Sigmoid colon (tissue), 7 donors: ENCODE measurements at regions of chr10 and their contacts with region 1.

Region 1: DNA sequence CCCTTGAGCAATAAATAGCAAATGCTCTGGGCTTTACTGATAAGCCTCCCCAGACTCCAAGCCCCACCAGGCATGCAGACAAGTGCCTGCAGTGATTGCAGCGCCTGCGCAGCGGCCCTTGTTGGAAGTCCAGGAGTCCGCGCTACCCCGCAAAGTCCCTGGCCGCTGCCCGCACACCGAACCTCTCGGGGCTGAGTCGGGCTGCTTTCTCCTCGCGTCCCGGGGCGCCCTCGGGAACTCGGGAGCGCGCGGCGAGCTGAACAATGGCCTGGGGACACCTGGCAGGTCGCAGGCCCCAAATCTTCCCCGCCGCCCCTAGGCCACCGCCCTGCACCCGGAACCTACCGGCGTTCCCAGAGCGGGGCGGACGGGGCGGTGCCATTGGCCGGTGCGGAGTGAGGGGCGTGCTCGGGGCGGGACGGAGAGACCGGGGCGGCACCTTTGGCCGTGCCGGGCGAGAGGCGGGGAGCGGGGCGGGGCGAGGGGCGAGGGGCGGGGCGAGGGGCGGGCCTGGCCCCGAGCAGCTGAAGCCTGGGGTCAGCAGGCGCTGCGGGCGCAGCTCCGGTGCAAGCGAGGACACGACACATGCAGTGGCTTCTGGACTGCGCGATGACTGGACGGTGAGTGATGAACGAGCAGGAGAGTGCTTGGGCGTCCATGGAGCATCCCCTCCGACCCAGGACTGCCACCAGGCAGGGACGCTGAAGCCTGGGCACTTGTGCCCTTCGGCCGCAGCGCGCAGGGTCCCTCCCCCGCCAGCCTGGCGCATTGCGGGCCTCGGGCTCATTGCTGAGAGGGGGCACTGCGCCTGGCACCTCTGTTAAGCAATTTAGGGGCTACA is at the start of gene RASSF4:
- DNase-seq: peak; percentile 96
- H3K4me3 ChIP-seq: peak within 1 kb of the TSS; percentile 65 to 74 (median 69)
- H3K27ac ChIP-seq: peak within 1 kb of the TSS; percentile 90 to 93 (median 91)
- H3K4me1 ChIP-seq: peaks cover 0 to 49% (median 30%) of the 10 kb centered on the region in 4 donors
- H3K27me3 ChIP-seq: no peaks in the 10 kb centered on the region
- CTCF ChIP-seq: no peak
- EP300 ChIP-seq: no peak
- POLR2A ChIP-seq: peak; percentile 70 to 87
- total RNA-seq, gene RASSF4: 23.2 to 61.7 (median 45.2) TPM

Region 2: GRCh38 chr10:44932517-44933450 is 26.7 kb before region 1 on chr10:
- intact Hi-C with region 1: loop called (anchors 2 kb)
- DNase-seq: peak; percentile 93
- H3K4me3 ChIP-seq: no peak overlapping the region
- H3K27ac ChIP-seq: peak overlapping the region in 2 of 4 donors; percentile 1 to 16
- H3K4me1 ChIP-seq: peaks cover 0 to 38% (median 28%) of the 10 kb centered on the region in 4 donors
- H3K27me3 ChIP-seq: no peaks in the 10 kb centered on the region
- CTCF ChIP-seq: peak; percentile 92 to 96 (median 96)
- EP300 ChIP-seq: no peak
- POLR2A ChIP-seq: no peak

Region 3: DNA sequence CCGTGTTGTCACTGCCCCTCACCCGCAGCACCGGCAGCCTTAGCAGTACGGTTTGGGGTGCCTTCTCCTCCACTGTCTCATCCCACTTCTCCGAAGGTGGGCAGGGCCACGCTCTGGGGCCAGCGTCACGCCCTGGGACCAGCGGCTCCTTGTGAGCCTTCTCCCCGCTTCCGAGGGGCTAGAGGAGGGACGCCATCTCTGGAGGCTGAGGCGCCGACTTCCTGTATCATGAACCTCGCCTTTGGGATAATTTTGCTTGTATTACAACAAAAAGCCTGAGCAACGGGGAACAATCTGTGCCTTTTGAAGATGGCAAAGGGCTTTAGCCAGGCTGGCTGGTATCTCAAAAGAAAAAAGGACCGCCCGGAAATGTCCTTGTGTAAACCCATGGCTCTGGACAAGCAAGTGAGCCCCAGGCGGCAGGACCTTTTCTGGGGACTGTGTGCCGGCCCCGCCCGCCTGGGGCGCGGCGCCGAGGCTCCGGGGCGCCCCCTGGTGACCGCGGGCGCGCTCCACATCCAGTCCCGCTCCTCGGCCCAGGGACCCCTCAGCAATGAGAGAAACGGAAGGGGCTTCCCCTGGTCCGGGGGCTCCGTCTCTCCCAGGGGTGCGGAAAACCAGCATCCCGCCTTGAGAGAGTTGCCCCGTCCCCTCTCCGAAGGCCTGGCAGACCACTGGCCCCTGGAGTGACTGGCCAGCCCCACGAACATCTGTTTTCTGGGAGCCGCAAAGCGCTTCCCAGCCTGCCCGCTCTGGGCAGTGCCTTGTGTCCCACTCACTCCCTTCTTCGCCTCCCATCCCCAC is 15.4 kb after region 1 on chr10:
- intact Hi-C with region 1: loop called (anchors 1 kb)
- DNase-seq: peak; percentile 89
- H3K4me3 ChIP-seq: peak overlapping the region; percentile 54 to 64 (median 54)
- H3K27ac ChIP-seq: peak overlapping the region; percentile 88 to 92 (median 90)
- H3K4me1 ChIP-seq: peaks cover 0 to 68% (median 62%) of the 10 kb centered on the region in 4 donors
- H3K27me3 ChIP-seq: no peaks in the 10 kb centered on the region
- CTCF ChIP-seq: peak; percentile 53 to 98 (median 91)
- EP300 ChIP-seq: no peak
- POLR2A ChIP-seq: no peak

Region 4: DNA sequence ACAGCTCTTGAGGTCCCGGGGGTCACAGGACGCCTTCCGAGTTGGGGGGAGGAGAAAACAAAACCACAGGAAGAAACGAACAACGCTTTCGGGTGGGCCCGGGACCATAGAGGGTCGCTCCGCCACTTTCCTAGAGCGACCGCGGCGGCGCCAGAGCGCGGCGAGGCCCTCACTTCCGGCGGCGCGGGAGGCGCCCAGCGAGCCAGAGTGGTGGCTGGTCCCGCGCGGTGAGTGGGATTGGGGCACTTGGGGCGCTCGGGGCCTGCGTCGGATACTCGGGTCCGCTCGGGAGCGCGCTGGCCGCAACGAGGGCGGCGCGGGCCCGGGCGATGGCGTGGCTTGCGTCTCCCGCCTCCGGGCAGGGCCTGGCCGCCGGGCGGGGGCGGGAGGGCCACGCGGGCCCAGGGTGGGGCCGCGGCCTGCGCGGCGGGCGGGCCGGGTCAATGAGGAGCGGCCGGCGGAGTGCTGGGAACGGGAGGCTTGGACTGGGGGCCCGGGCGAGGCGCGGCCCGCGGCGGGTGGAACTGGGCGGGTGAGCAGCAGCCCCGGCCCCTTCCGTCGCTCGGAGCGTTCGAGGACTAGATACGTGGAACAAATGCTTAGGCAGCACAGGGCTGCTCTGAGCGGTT is 41.4 kb after region 1 on chr10 and contains the start of gene ZNF22:
- intact Hi-C with region 1: loop called (anchors 2 kb)
- DNase-seq: peak; percentile 82
- H3K4me3 ChIP-seq: peak within 1 kb of the TSS; percentile 51 to 66 (median 61)
- H3K27ac ChIP-seq: peak within 1 kb of the TSS; percentile 92 to 97 (median 93)
- H3K4me1 ChIP-seq: peaks cover 0 to 60% (median 38%) of the 10 kb centered on the region in 4 donors
- H3K27me3 ChIP-seq: no peaks in the 10 kb centered on the region
- CTCF ChIP-seq: peak in 2 of 4 experiments; percentile 4 to 32
- EP300 ChIP-seq: no peak
- POLR2A ChIP-seq: peak in 1 of 2 donors; percentile 48
- total RNA-seq, gene ZNF22: 18.3 to 29.9 (median 24.0) TPM